GM13976 (cell line): ENCODE measurements at regions of chrX and their contacts with region 1.

Region 1: GRCh38 chrX:118807151-118808017 is 16.2 kb upstream of the ZCCHC12 start:
- DNase-seq: peak; percentile 37
- CTCF ChIP-seq: peak; percentile 60

Region 2: DNA sequence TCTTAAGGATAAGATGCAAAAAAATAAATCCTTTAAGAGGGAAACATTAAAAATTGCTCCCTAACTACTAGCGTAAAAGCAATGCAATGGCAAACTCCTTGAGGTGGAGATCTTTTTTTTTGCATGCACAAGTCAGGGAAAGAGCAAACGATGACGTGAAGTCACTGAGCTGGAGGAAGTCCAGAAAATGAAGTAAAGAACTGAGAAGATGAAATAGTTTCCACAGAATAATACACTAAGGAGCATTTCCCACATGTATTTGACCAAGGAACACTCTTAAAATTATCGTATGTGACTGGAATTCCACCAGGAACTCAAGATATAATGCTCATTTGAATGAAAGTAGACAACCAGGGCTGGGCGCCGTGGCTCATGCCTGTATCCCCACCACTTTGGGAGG is 332.8 kb before region 1 on chrX:
- in situ Hi-C with region 1: loop called (anchors 10 kb)
- DNase-seq: no peak
- CTCF ChIP-seq: no peak

Region 3: DNA sequence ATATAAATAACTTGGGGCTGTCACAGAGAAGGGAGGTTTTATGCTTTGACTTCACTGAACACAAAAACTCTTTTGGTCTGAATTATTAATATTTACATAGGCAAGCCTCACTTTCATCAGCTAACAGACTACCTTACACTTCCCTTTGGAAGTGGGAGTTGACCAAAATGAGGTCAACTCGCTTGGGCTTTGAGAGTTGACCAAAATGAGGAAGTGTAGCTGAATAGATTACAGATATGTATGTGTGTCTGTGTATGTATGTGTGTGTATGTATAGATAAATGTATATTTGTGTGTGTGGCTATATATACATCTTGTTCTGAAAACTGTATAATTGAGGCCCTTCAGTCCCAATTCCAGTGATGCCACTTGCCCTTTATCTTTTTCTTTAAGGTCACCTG is 193.2 kb before region 1 on chrX:
- in situ Hi-C with region 1: loop called (anchors 10 kb)
- DNase-seq: peak; percentile 14
- CTCF ChIP-seq: no peak

Region 4: GRCh38 chrX:118872102-118872566 is 64.8 kb after region 1 on chrX:
- in situ Hi-C with region 1: no loop called
- DNase-seq: no peak
- CTCF ChIP-seq: no peak